Activated CD8-positive, alpha-beta T cell treated with anti-CD3 and anti-CD28 coated beads for 36 hours (primary cell): ENCODE measurements at regions of chr12 and their contacts with region 1.

Region 1: DNA sequence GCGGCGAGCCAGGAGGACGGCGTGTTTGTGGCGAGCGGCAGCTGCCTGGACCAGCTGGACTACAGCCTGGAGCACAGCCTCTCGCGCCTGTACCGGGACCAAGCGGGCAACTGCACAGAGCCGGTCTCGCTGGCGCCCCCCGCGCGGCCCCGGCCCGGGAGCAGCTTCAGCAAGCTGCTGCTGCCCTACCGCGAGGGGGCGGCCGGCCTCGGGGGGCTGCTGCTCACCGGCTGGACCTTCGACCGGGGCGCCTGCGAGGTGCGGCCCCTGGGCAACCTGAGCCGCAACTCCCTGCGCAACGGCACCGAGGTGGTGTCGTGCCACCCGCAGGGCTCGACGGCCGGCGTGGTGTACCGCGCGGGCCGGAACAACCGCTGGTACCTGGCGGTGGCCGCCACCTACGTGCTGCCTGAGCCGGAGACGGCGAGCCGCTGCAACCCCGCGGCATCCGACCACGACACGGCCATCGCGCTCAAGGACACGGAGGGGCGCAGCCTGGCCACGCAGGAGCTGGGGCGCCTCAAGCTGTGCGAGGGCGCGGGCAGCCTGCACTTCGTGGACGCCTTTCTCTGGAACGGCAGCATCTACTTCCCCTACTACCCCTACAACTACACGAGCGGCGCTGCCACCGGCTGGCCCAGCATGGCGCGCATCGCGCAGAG is 873 bp downstream of the PLXNC1 start:
- DNase-seq: peak; percentile 58
- ATAC-seq: peak; percentile 22
- H3K4me3 Mint-ChIP-seq: peak overlapping the region; percentile 87
- H3K27ac Mint-ChIP-seq: no peak overlapping the region
- H3K4me1 Mint-ChIP-seq: peaks cover 24% of the 10 kb centered on the region
- H3K27me3 Mint-ChIP-seq: peaks cover 24% of the 10 kb centered on the region
- CTCF ChIP-seq: peak; percentile 70

Region 2: DNA sequence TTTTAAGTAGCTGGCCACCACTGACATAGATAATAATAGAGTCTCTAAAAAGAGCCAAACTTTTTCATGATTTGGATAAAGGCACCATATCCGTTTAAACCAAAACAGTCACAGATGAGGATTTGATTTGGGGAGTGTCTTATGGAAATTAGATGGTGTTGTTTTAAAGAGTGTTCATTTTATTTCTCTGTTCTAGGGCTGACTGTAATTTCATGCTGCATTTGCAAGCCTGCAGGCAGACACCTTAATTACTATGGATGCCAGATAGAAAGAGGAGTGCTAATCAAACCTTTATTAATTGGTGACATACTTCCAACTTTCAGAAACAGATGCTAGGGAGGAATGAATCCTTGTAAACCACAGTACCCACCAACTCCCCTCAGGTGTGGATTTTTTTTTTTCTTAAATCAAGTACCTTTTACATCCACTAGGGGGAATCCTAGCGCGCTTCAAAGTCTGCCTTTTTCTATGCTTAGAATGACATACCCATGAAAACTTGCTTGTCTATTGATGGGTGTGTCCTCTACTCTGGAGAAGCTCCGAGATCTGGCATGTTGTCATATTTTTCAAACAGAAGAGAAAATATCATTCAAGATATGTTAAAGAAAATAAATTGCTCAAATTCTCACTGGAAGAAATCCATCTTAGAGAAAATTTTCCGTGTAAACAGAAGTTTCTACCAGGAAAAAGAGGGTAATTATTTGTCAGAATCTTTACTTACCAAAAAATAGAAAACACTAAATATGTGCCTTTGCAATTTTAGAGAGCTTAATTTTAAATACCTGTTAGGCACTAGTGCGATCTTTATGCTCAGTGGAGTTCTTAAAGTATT is 15.1 kb before region 1 on chr12:
- CTCF ChIA-PET with region 1: interaction called, 27 read pairs
- POLR2A ChIA-PET with region 1: no interaction called
- intact Hi-C with region 1: no loop called
- DNase-seq: peak; percentile 53
- ATAC-seq: peak; percentile 96
- H3K4me3 Mint-ChIP-seq: no peak overlapping the region
- H3K27ac Mint-ChIP-seq: no peak overlapping the region
- H3K4me1 Mint-ChIP-seq: peaks cover 2% of the 10 kb centered on the region
- H3K27me3 Mint-ChIP-seq: no peaks in the 10 kb centered on the region
- CTCF ChIP-seq: peak; percentile 82

Region 3: GRCh38 chr12:94262228-94263010 is 113.2 kb after region 1 on chr12:
- CTCF ChIA-PET with region 1: interaction called, 3 read pairs
- POLR2A ChIA-PET with region 1: no interaction called
- intact Hi-C with region 1: loop called (anchors 5 kb)
- DNase-seq: peak; percentile 90
- ATAC-seq: peak; percentile 81
- H3K4me3 Mint-ChIP-seq: peak overlapping the region; percentile 88
- H3K27ac Mint-ChIP-seq: peak overlapping the region; percentile 99
- H3K4me1 Mint-ChIP-seq: peaks cover 40% of the 10 kb centered on the region
- H3K27me3 Mint-ChIP-seq: no peaks in the 10 kb centered on the region
- CTCF ChIP-seq: no peak

Region 4: GRCh38 chr12:94305130-94305957 is 156.1 kb after region 1 on chr12:
- CTCF ChIA-PET with region 1: no interaction called
- POLR2A ChIA-PET with region 1: interaction called, 5 read pairs
- intact Hi-C with region 1: loop called (anchors 5 kb)
- DNase-seq: peak; percentile 79
- ATAC-seq: peak; percentile 92
- H3K4me3 Mint-ChIP-seq: peak overlapping the region; percentile 40
- H3K27ac Mint-ChIP-seq: peak overlapping the region; percentile 75
- H3K4me1 Mint-ChIP-seq: peaks cover 48% of the 10 kb centered on the region
- H3K27me3 Mint-ChIP-seq: peaks cover 1% of the 10 kb centered on the region
- CTCF ChIP-seq: no peak

Region 5: DNA sequence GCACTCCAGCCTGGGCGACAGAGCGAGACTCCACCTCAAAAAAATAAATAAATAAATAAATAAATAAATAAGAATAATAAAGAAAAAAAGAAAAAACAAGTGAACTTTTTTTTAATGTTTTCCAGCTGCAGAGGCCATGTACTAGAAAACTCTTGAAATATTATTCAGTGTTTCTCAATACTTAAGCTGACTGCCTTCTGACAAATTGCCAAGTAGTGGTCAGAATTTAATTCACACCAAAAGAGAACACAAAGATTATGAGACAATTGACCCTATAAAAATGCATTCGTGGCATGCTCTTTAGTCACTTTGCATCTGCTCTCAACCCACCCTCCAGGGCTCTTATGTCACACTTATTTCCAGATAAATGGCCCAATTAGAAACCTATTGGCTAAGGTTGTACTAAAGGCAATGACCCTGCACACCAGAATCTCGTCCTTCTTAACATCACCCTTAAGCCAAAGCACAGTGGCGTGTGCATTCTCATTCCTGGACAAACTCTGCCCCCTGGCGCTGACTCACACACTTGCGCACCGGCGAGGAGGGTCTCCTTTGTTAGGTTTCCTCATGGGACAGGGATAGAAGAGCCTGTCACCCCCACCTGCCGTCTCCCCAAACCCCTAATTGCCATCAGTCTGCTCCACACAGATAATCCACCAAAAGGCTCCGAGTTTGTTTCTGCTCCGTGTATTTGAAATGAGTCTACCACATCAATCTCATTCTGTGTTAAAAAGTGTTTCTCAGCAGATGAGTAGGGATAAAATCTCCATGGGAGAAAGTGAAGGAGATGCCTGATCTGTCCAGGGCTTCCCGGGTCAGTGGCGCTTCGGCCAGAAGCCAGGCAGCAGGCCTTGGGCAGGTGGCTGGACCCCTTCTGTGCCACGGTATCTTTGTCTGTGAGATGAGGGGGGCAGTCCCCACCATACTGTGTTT is 383.5 kb after region 1 on chr12:
- CTCF ChIA-PET with region 1: interaction called, 13 read pairs
- POLR2A ChIA-PET with region 1: no interaction called
- intact Hi-C with region 1: no loop called
- DNase-seq: peak; percentile 82
- ATAC-seq: peak; percentile 87
- H3K4me3 Mint-ChIP-seq: no peak overlapping the region
- H3K27ac Mint-ChIP-seq: no peak overlapping the region
- H3K4me1 Mint-ChIP-seq: peaks cover 2% of the 10 kb centered on the region
- H3K27me3 Mint-ChIP-seq: peaks cover 7% of the 10 kb centered on the region
- CTCF ChIP-seq: peak; percentile 79